Ascending aorta (tissue), 2 donors: ENCODE measurements at regions of chr19 and their contacts with region 1.

Region 1: DNA sequence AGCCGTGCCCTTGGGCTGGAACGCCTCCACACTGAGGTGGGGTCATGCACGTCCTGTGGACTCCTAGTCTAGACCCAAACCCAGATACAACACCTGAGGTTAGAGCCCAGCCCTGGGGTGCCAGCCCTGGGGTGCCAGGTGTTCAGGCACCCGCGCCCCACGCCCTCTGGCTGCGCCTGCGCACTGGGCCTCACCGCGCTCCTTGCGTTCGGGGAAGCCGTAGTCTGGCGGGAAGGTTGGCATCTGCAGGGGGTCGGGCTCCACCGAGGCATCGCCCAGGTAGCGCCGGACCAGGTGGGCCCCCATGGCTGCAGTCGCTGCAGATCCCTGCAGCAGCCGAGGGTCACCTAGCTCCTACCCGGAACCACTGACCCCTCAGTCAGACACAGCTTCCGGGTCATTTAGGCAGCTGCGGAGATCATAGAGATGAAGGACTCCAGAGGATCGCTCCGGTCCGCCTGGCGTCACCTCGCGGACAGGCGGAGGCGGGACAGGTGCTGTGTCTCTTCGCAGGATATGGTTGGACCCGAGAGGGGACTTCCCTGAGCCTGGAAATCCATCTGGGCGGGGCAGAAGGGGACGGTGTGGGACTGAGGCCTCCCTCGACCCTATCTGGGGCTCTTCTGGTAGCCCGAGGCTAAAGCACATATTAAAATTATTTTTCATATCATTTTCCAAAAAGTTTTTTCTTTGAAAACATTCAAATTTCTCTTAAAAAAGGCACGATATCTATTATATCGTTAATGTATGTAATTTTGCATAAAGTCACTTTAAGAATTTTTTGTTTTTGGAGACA is at the start of gene NDUFB7:
- DNase-seq: peak; percentile 79 to 97
- H3K4me3 ChIP-seq: peak within 1 kb of the TSS; percentile 94 to 99
- H3K27ac ChIP-seq: peak within 1 kb of the TSS; percentile 47 to 48
- H3K4me1 ChIP-seq: peaks cover 0 to 15% of the 10 kb centered on the region in 2 donors
- H3K27me3 ChIP-seq: no peaks in the 10 kb centered on the region
- CTCF ChIP-seq: peak; percentile 55 to 92 (median 91)
- total RNA-seq, gene NDUFB7: 612 TPM

Region 2: GRCh38 chr19:14556662-14557188 is 15.2 kb before region 1 on chr19:
- intact Hi-C with region 1: loop called (anchors 1 kb)
- DNase-seq: peak in 1 of 2 donors; percentile 79
- H3K4me3 ChIP-seq: peak overlapping the region in 1 of 2 donors; percentile 44
- H3K27ac ChIP-seq: peak overlapping the region in 1 of 2 donors; percentile 15
- H3K4me1 ChIP-seq: peaks cover 5 to 20% of the 10 kb centered on the region in 2 donors
- H3K27me3 ChIP-seq: no peaks in the 10 kb centered on the region
- CTCF ChIP-seq: peak; percentile 79 to 97 (median 96)

Region 3: GRCh38 chr19:14689598-14690503 is 118.0 kb after region 1 on chr19 and contains the start of gene ZNF333:
- intact Hi-C with region 1: loop called (anchors 5 kb)
- DNase-seq: peak; percentile 84 to 99
- H3K4me3 ChIP-seq: peak within 1 kb of the TSS; percentile 76 to 97
- H3K27ac ChIP-seq: peak within 1 kb of the TSS; percentile 86 to 93
- H3K4me1 ChIP-seq: peaks cover 0 to 10% of the 10 kb centered on the region in 2 donors
- H3K27me3 ChIP-seq: no peaks in the 10 kb centered on the region
- CTCF ChIP-seq: no peak
- total RNA-seq, gene ZNF333: 33.7 TPM

Region 4: GRCh38 chr19:14821937-14822336 is 250.0 kb after region 1 on chr19:
- intact Hi-C with region 1: no loop called
- DNase-seq: no peak
- H3K4me3 ChIP-seq: no peak overlapping the region
- H3K27ac ChIP-seq: no peak overlapping the region
- H3K4me1 ChIP-seq: no peaks in the 10 kb centered on the region
- H3K27me3 ChIP-seq: no peaks in the 10 kb centered on the region
- CTCF ChIP-seq: no peak

Region 5: GRCh38 chr19:14889994-14890642 is 318.2 kb after region 1 on chr19:
- intact Hi-C with region 1: loop called (anchors 5 kb)
- DNase-seq: no peak
- H3K4me3 ChIP-seq: no peak overlapping the region
- H3K27ac ChIP-seq: no peak overlapping the region
- H3K4me1 ChIP-seq: no peaks in the 10 kb centered on the region
- H3K27me3 ChIP-seq: no peaks in the 10 kb centered on the region
- CTCF ChIP-seq: no peak